Body of pancreas (tissue), 4 donors: ENCODE measurements at regions of chr7 and their contacts with region 1.

Region 1: DNA sequence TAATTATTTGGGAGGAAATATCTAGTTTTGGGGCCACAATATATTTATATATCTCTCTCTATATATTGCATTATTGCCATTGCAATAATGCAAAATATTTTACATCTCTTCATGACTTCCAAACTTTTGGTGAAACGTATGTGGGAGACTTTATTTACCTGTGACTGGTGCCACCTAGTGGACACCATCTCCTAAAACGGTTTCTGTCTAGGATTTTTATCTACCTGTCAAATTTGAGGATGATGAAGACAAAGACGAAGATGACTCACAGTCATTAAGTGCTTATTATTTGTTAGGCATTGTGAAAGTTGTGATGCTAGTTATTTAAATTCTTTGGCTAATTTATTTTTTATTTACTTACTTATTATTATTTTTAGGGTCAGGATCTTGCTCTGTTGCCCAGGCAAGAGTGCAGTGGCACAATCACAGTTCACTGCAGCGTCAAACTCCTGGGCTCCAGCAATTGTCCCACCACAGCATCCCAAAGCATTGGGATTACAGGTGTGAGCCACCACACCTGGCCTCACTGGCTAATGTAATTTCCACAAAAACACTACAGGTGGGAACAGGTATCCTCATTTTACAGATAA is 18.7 kb upstream of the CBLL1 start:
- DNase-seq: peak; percentile 50 to 68 (median 59)
- ATAC-seq: no peak
- H3K4me3 ChIP-seq: no peak overlapping the region
- H3K27ac ChIP-seq: no peak overlapping the region
- H3K4me1 ChIP-seq: no peaks in the 10 kb centered on the region
- H3K27me3 ChIP-seq: no peaks in the 10 kb centered on the region
- CTCF ChIP-seq: peak; percentile 31 to 81 (median 73)
- POLR2A ChIP-seq: no peak

Region 2: DNA sequence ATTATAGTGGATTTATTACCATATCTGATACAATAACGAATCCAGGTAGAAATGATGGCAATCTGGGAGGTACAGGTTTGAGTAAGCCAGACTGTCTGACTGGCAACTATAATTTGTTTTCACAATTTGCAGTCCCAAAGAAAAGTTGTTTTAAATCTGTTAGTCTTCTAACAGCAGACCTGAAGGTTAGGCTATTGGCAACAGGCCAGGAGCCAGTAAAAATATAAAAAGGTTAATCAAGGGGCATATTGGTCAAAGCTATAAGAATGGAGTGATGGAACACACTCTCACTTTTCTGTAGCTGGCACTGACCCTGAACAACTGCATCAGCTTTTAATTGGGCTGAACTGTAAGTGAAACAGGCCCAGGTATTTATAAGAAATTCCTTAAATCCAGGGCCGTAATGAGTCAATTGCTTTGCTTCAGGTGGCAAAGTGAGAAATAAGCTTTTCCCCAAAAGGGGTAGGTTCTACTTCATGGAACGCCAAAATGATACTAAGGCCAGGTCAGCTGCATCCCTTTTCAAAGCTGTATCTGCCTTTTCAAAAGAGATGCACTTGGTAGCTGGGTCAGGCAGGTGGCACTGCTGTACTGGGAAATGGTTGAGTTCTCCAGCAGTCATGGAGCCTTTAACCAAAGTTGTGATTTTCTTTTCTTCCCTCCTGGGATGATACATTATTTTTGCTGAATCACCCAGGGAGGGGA is 262.4 kb before region 1 on chr7:
- intact Hi-C with region 1: loop called (anchors 10 kb)
- DNase-seq: peak; percentile 59 to 73 (median 67)
- ATAC-seq: peak; percentile 78
- H3K4me3 ChIP-seq: no peak overlapping the region
- H3K27ac ChIP-seq: no peak overlapping the region
- H3K4me1 ChIP-seq: no peaks in the 10 kb centered on the region
- H3K27me3 ChIP-seq: no peaks in the 10 kb centered on the region
- CTCF ChIP-seq: peak; percentile 31 to 88 (median 83)
- POLR2A ChIP-seq: no peak